ENCODE measurements at regions of chr10 and their contacts with region 1.

Region 1: GRCh38 chr10:34637418-34637911 is 177.6 kb downstream of the PARD3 start:
- DNase-seq: peak; percentile 40
- ATAC-seq: peak; percentile 89
- H3K4me3 ChIP-seq: peak overlapping the region; percentile 7; the same call in 1 of the 2 replicates
- H3K27ac ChIP-seq: no peak overlapping the region
- H3K4me1 ChIP-seq: 0 out of 2 replicates have a peak, but pooled peaks cover 5% of the 10 kb centered on the region
- H3K27me3 ChIP-seq: no peaks in the 10 kb centered on the region
- CTCF ChIP-seq: peak; percentile 91 to 98 (median 97)
- EP300 ChIP-seq: peak in 1 of 2 experiments; percentile 42; a peak in 2 of 4 replicates
- POLR2A ChIP-seq: no peak
- RAD21 ChIP-seq: peak; percentile 75

Region 2: DNA sequence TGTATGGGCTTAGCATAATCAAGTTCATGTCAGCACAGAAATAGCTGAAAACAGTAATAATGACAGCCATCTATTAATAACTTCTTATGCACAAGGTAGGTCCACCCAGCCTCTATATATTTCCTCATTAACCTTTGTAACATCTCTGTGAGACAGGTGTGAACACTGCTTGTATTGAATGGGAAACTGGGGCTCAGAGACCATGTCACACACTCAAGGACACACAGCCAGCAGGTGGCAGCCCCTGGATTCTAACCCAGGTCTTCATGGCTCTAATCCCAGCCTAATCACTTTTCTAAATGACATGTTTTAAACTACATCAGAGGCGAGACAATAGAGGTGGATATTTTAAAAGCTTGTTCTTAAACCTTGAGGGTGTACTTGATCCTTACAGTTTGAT is 413.8 kb before region 1 on chr10:
- CTCF ChIA-PET with region 1: interaction called, 13 read pairs
- POLR2A ChIA-PET with region 1: no interaction called
- RAD21 ChIA-PET with region 1: interaction called, 4 read pairs
- SMC1A ChIA-PET with region 1: interaction called, 8 read pairs
- in situ Hi-C with region 1: no loop called
- intact Hi-C with region 1: loop called (anchors 1 kb)
- DNase-seq: no peak
- ATAC-seq: peak; percentile 53
- H3K4me3 ChIP-seq: no peak overlapping the region
- H3K27ac ChIP-seq: no peak overlapping the region
- H3K4me1 ChIP-seq: no peaks in the 10 kb centered on the region
- H3K27me3 ChIP-seq: no peaks in the 10 kb centered on the region; a peak in 1 of 4 replicates
- CTCF ChIP-seq: no peak; a peak in 1 of 6 replicates
- EP300 ChIP-seq: no peak
- POLR2A ChIP-seq: no peak
- RAD21 ChIP-seq: no peak

Region 3: GRCh38 chr10:34384372-34384771 is 253.1 kb before region 1 on chr10:
- CTCF ChIA-PET with region 1: interaction called, 11 read pairs
- POLR2A ChIA-PET with region 1: no interaction called
- RAD21 ChIA-PET with region 1: interaction called, 4 read pairs
- SMC1A ChIA-PET with region 1: interaction called, 5 read pairs
- in situ Hi-C with region 1: no loop called
- intact Hi-C with region 1: no loop called
- DNase-seq: no peak
- ATAC-seq: no peak
- H3K4me3 ChIP-seq: no peak overlapping the region
- H3K27ac ChIP-seq: no peak overlapping the region
- H3K4me1 ChIP-seq: no peaks in the 10 kb centered on the region
- H3K27me3 ChIP-seq: no peaks in the 10 kb centered on the region
- CTCF ChIP-seq: no peak
- EP300 ChIP-seq: no peak
- POLR2A ChIP-seq: no peak
- RAD21 ChIP-seq: no peak

Region 4: GRCh38 chr10:34528320-34528719 is 109.1 kb before region 1 on chr10:
- CTCF ChIA-PET with region 1: interaction called, 210 read pairs
- POLR2A ChIA-PET with region 1: no interaction called
- RAD21 ChIA-PET with region 1: interaction called, 97 read pairs
- SMC1A ChIA-PET with region 1: interaction called, 127 read pairs
- in situ Hi-C with region 1: loop called (anchors 5 kb)
- intact Hi-C with region 1: loop called (anchors 1 kb)
- DNase-seq: no peak
- ATAC-seq: peak; percentile 67
- H3K4me3 ChIP-seq: no peak overlapping the region
- H3K27ac ChIP-seq: no peak overlapping the region
- H3K4me1 ChIP-seq: peaks cover 7% of the 10 kb centered on the region; the same call in 1 of the 2 replicates
- H3K27me3 ChIP-seq: no peaks in the 10 kb centered on the region
- CTCF ChIP-seq: no peak
- EP300 ChIP-seq: no peak
- POLR2A ChIP-seq: no peak
- RAD21 ChIP-seq: no peak

Region 5: DNA sequence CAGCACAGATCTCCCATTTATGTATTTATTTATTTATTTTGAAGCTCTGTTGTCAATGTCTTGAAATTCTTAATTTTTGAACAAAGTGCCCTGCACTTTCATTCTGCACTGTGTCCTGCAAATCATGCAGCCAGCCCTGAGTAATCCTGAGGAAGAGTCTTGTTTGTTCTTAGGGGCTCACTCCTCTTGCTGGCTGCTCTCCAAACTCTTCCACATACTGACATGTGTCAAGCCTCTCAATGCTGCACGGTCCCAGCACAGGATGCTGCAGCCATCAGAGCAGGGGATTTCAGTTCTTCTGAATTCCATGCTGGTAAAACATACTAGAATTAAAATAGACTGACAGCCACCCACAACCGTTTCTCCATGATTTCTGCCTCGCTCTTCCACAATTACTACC is 29.6 kb before region 1 on chr10:
- CTCF ChIA-PET with region 1: interaction called, 32 read pairs
- POLR2A ChIA-PET with region 1: no interaction called
- RAD21 ChIA-PET with region 1: interaction called, 4 read pairs
- SMC1A ChIA-PET with region 1: interaction called, 10 read pairs
- in situ Hi-C with region 1: no loop called
- intact Hi-C with region 1: no loop called
- DNase-seq: no peak
- ATAC-seq: no peak
- H3K4me3 ChIP-seq: no peak overlapping the region
- H3K27ac ChIP-seq: no peak overlapping the region
- H3K4me1 ChIP-seq: no peaks in the 10 kb centered on the region
- H3K27me3 ChIP-seq: no peaks in the 10 kb centered on the region
- CTCF ChIP-seq: no peak
- EP300 ChIP-seq: no peak
- POLR2A ChIP-seq: no peak
- RAD21 ChIP-seq: no peak

Region 6: DNA sequence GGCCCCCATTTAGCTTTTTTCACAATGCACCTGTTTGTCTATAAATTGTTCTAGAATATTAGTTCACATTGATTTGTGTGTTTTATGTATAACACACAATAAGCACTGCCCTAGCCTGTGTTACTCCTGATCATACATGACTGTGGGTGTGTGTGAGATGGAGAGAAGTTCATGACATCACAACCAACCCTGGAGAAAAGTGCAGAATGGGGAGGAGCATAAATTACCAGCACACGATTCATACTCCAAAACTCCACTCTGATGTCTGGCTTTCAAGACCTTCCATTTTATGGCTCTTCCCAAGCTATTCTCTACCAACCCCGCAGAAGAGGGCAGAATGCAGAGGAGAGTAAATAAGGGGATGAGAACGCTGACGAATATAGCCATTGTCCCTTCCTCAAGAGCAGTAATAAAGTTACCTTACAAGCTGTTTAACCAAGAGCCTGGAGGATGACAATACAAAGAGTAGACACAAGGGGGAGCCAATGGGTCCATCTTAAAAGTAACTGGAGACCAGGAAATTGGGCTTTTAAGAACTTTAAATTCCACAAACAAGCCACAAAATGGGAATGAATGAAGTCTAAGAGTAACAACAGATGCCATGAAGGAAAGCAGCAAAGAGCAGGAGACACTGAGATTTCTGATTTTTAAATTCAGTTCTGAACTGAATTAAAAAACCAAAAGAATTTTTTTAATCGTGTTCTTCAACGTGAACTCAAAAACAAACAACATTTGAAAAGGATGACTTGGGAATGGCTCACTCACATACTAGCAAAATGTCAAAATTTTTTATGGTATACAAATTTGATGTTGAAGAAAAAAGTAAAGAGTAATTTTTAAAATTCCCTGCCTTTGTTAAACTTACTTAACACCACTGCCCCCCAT is 18.1 kb after region 1 on chr10:
- CTCF ChIA-PET with region 1: interaction called, 10 read pairs
- POLR2A ChIA-PET with region 1: no interaction called
- RAD21 ChIA-PET with region 1: no interaction called
- SMC1A ChIA-PET with region 1: interaction called, 3 read pairs
- in situ Hi-C with region 1: no loop called
- intact Hi-C with region 1: no loop called
- DNase-seq: no peak
- ATAC-seq: peak; percentile 71
- H3K4me3 ChIP-seq: no peak overlapping the region
- H3K27ac ChIP-seq: no peak overlapping the region
- H3K4me1 ChIP-seq: no peaks in the 10 kb centered on the region
- H3K27me3 ChIP-seq: no peaks in the 10 kb centered on the region
- CTCF ChIP-seq: peak; percentile 57 to 70 (median 66)
- EP300 ChIP-seq: no peak
- POLR2A ChIP-seq: no peak
- RAD21 ChIP-seq: peak; percentile 56